ENCODE measurements at regions of chr16 and their contacts with region 1.

Region 1: GRCh38 chr16:87636072-87636684 is 33.9 kb downstream of the JPH3 start:
- DNase-seq: peak; percentile 90 to 93
- ATAC-seq: peak; percentile 92
- H3K4me3 ChIP-seq: no peak overlapping the region
- H3K27ac ChIP-seq: no peak overlapping the region
- H3K4me1 ChIP-seq: no peaks in the 10 kb centered on the region
- H3K27me3 ChIP-seq: no peaks in the 10 kb centered on the region

Region 2: GRCh38 chr16:87416826-87417527 is 219.2 kb before region 1 on chr16:
- intact Hi-C with region 1: loop called (anchors 5 kb)
- DNase-seq: peak in 1 of 2 donors; percentile 58
- ATAC-seq: no peak
- H3K4me3 ChIP-seq: no peak overlapping the region
- H3K27ac ChIP-seq: no peak overlapping the region
- H3K4me1 ChIP-seq: no peaks in the 10 kb centered on the region
- H3K27me3 ChIP-seq: no peaks in the 10 kb centered on the region

Region 3: DNA sequence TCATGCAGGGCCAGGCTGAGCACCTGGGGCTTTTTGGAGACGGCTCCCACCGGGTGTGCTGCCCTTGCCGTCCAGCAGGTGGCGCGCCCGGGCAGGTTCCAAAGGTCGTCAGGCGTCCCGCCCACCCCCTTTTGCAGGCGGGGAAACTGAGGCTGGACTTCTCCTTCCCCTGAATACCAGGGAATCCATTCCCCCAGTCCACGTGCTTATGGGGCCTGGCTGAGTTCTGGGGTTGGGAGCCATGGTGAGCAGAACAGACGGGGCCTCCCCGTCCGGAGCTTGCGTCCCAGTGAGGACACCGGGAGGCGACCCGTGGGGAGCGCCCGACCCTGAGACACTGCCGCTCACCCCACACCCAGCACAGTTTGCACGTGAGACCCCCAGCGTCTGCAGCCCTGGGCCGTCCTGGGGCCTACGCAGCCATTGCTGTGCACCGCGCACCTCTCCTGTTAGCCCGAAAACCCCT is 85.6 kb before region 1 on chr16:
- intact Hi-C with region 1: loop called (anchors 2 kb)
- DNase-seq: peak in 1 of 2 donors; percentile 88
- ATAC-seq: peak; percentile 63
- H3K4me3 ChIP-seq: no peak overlapping the region
- H3K27ac ChIP-seq: no peak overlapping the region
- H3K4me1 ChIP-seq: no peaks in the 10 kb centered on the region
- H3K27me3 ChIP-seq: no peaks in the 10 kb centered on the region

Region 4: DNA sequence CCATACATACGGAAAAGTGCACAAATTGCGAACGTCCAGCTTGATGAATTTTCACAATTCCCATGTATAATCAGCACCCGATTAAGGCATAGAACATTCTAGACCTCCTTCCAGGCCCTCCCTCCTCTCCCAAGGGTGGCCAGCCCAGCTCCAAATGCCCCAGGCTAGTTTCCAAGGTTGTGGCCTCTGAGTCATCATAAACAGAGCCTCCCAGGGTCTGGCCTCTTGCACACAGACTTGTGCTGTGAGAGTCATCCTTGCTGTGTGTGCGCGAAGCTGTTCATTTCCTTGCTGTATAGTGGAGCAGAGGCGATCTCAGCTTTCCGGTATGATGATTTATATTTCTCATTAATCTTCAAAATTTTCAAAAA is 54.4 kb before region 1 on chr16:
- intact Hi-C with region 1: loop called in 1 of 2 experiments (anchors 5 kb)
- DNase-seq: peak; percentile 89
- ATAC-seq: peak; percentile 90
- H3K4me3 ChIP-seq: no peak overlapping the region
- H3K27ac ChIP-seq: peak overlapping the region in 1 of 2 donors; percentile 82
- H3K4me1 ChIP-seq: no peaks in the 10 kb centered on the region
- H3K27me3 ChIP-seq: no peaks in the 10 kb centered on the region

Region 5: DNA sequence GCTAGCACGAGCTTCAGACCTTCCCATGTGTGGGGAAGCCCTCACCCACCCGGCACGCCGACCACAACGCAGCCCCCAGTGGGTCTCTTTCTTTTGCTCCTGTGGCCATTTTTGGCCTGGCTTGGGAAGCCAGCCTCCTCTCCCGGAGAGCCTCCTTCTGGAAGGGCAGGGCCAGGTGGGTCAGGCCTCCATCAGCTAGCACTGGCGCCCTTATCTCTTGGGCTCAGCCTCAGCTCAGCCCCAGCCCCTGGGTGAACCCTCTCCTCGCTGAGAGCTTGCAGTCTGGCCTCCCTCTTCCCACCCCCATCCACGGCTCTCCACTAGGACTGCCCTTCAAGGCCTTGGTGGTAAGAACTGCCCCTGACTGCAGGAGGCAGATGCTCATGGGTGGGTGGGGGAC is 48.5 kb before region 1 on chr16:
- intact Hi-C with region 1: loop called (anchors 1 to 5 kb)
- DNase-seq: peak in 1 of 2 donors; percentile 17
- ATAC-seq: no peak
- H3K4me3 ChIP-seq: no peak overlapping the region
- H3K27ac ChIP-seq: no peak overlapping the region
- H3K4me1 ChIP-seq: no peaks in the 10 kb centered on the region
- H3K27me3 ChIP-seq: peaks cover 0 to 2% of the 10 kb centered on the region in 2 donors